Naive thymus-derived CD4-positive, alpha-beta T cell (primary cell): ENCODE measurements at regions of chr14 and their contacts with region 1.

Region 1: DNA sequence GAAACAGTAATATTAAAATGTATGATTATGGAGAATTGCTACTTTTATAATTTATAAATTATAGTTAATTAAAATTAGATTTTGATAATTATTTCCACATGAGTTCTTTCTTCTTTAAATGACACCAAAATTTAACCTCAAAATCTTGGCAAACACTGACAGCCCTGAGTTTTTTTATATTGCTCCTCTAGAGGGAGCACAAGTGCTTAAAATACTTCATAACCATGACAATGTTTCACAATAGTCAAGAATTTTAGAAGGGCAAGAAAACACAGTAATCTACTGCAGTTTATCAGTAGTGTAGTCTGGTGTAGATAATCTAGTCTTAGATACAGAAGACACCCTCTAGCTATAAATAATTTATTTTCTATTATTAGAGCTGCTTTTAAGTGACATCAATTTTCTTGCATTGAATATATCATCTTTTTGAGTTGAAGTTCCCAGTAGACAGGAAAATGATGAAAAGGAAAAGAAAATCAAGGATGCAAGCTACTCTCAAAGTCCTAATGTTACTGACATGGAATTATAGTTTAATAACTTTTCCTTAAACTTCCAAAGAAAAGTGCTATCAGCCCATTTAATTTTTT is 14.3 kb upstream of the PTGER2 start:
- DNase-seq: peak in 6 of 9 donors; percentile 28 to 68 (median 51)
- ATAC-seq: peak; percentile 84
- H3K4me3 ChIP-seq: no peak overlapping the region
- H3K4me3 Mint-ChIP-seq: peak overlapping the region in 1 of 10 donors; percentile 23
- H3K27ac ChIP-seq: no peak overlapping the region
- H3K27ac Mint-ChIP-seq: no peak overlapping the region
- H3K4me1 ChIP-seq: peaks cover 3 to 5% of the 10 kb centered on the region in 2 donors
- H3K4me1 Mint-ChIP-seq: peaks cover 8 to 63% (median 25%) of the 10 kb centered on the region in 7 donors
- H3K27me3 ChIP-seq: no peaks in the 10 kb centered on the region
- H3K27me3 Mint-ChIP-seq: peaks cover 0 to 9% (median 0%) of the 10 kb centered on the region in 5 donors

Region 2: GRCh38 chr14:51922624-51923023 is 377.2 kb before region 1 on chr14:
- CTCF ChIA-PET with region 1: no interaction called
- POLR2A ChIA-PET with region 1: no interaction called
- intact Hi-C with region 1: no loop called
- DNase-seq: no peak
- ATAC-seq: peak; percentile 29
- H3K4me3 ChIP-seq: no peak overlapping the region
- H3K4me3 Mint-ChIP-seq: peak overlapping the region in 6 of 10 donors; percentile 1 to 39 (median 36)
- H3K27ac ChIP-seq: no peak overlapping the region
- H3K27ac Mint-ChIP-seq: peak overlapping the region in 8 of 9 donors; percentile 5 to 81 (median 65)
- H3K4me1 ChIP-seq: peaks cover 5 to 17% of the 10 kb centered on the region in 2 donors
- H3K4me1 Mint-ChIP-seq: peaks cover 22 to 80% (median 71%) of the 10 kb centered on the region in 7 donors
- H3K27me3 ChIP-seq: no peaks in the 10 kb centered on the region
- H3K27me3 Mint-ChIP-seq: no peaks in the 10 kb centered on the region

Region 3: DNA sequence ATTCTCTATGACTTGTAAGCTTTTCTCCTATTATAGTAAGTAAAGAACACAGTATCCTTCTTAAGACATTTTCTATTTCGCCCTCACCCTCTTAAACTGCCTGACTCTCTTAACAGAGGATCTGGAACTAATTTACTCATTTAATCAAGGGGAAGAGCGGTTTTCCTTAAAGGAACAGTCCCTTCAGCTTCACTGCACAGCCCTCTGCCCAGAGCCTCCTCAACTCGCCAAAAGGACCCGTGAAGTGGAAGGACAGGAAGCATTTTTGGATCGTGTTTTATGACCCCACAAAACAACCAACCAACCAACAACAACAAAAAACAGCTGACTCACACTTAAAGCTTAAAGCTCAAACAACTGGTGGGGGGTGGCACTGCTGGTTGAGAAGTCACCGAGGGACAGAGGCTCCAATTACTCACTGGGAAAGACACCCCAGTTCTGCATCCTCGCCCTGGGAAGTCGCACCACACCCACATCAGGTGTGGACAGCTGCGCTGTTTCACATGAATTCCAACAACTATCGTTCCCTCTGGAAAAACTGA is 266.6 kb before region 1 on chr14:
- CTCF ChIA-PET with region 1: no interaction called
- POLR2A ChIA-PET with region 1: no interaction called
- intact Hi-C with region 1: no loop called
- DNase-seq: no peak
- ATAC-seq: no peak
- H3K4me3 ChIP-seq: no peak overlapping the region
- H3K4me3 Mint-ChIP-seq: no peak overlapping the region
- H3K27ac ChIP-seq: no peak overlapping the region
- H3K27ac Mint-ChIP-seq: no peak overlapping the region
- H3K4me1 ChIP-seq: no peaks in the 10 kb centered on the region
- H3K4me1 Mint-ChIP-seq: peaks cover 0 to 2% (median 0%) of the 10 kb centered on the region in 7 donors
- H3K27me3 ChIP-seq: no peaks in the 10 kb centered on the region
- H3K27me3 Mint-ChIP-seq: peaks cover 4 to 16% (median 15%) of the 10 kb centered on the region in 5 donors

Region 4: DNA sequence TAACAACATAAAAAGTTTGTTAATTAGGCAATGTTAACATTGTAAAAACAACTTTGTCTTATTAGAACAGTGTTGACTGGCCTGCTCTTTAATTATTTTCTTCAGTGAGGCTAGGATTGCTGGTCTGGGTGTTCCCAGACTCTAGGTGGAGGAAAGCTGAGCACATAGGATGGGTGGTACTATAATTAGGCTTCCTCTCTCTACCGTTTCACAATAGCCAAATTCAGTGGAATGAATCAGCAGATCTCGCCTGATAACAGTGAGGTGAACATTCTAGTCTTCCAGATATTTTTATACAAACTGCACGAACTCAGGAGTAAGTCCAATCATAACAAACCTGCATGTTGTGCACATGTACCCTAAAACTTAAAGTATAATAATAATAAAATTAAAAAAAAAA is 20.4 kb before region 1 on chr14:
- CTCF ChIA-PET with region 1: no interaction called
- POLR2A ChIA-PET with region 1: no interaction called
- intact Hi-C with region 1: no loop called
- DNase-seq: no peak
- ATAC-seq: no peak
- H3K4me3 ChIP-seq: no peak overlapping the region
- H3K4me3 Mint-ChIP-seq: no peak overlapping the region
- H3K27ac ChIP-seq: no peak overlapping the region
- H3K27ac Mint-ChIP-seq: no peak overlapping the region
- H3K4me1 ChIP-seq: no peaks in the 10 kb centered on the region
- H3K4me1 Mint-ChIP-seq: peaks cover 5 to 33% (median 10%) of the 10 kb centered on the region in 7 donors
- H3K27me3 ChIP-seq: no peaks in the 10 kb centered on the region
- H3K27me3 Mint-ChIP-seq: peaks cover 0 to 32% (median 0%) of the 10 kb centered on the region in 5 donors

Region 5: DNA sequence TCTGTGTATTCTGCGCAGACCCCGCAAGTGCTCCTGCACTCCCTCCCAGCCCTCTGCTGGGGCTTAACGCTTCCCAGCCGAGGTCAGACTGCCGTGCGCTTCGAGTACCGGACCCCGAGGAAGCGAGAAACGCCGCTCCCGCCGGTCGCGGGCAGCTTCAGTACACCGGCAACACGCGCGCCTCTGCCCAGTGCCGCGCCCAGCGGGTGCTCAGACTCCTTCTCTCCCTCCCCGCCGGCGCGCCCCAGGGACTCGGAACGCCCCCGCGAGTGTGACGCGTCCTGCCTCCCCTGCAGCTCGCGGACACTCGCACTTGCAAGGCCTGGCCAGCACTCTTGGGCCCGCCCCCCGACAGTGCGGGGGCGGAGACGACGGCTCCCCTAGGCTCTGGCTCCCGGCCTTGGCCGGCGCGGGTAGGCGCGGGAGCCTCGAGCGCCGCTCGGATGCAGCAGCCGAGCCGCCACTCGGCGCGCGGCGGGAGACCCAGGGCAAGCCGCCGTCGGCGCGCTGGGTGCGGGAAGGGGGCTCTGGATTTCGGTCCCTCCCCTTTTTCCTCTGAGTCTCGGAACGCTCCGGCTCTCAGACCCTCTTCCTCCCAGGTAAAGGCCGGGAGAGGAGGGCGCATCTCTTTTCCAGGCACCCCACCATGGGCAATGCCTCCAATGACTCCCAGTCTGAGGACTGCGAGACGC is 14.3 kb after region 1 on chr14 and contains the start of gene PTGER2:
- CTCF ChIA-PET with region 1: interaction called, 9 read pairs
- POLR2A ChIA-PET with region 1: no interaction called
- intact Hi-C with region 1: loop called (anchors 1 to 2 kb)
- DNase-seq: peak; percentile 12 to 91 (median 34)
- ATAC-seq: peak; percentile 79
- H3K4me3 ChIP-seq: peak within 1 kb of the TSS; percentile 80
- H3K4me3 Mint-ChIP-seq: peak within 1 kb of the TSS; percentile 88 to 100 (median 98)
- H3K27ac ChIP-seq: peak within 1 kb of the TSS; percentile 62
- H3K27ac Mint-ChIP-seq: peak within 1 kb of the TSS; percentile 51 to 98 (median 92)
- H3K4me1 ChIP-seq: peaks cover 14 to 26% of the 10 kb centered on the region in 2 donors
- H3K4me1 Mint-ChIP-seq: peaks cover 48 to 81% (median 57%) of the 10 kb centered on the region in 7 donors
- H3K27me3 ChIP-seq: no peaks in the 10 kb centered on the region
- H3K27me3 Mint-ChIP-seq: peaks cover 0 to 5% (median 0%) of the 10 kb centered on the region in 5 donors
- total RNA-seq, gene PTGER2: 1.7 to 162 (median 15.2) TPM

Region 6: GRCh38 chr14:52413729-52414408 is 114.1 kb after region 1 on chr14:
- CTCF ChIA-PET with region 1: interaction called, 3 read pairs
- POLR2A ChIA-PET with region 1: no interaction called
- intact Hi-C with region 1: loop called in 1 of 2 experiments (anchors 1 kb)
- DNase-seq: no peak
- ATAC-seq: no peak
- H3K4me3 ChIP-seq: no peak overlapping the region
- H3K4me3 Mint-ChIP-seq: peak overlapping the region in 2 of 10 donors; percentile 13 to 74
- H3K27ac ChIP-seq: no peak overlapping the region
- H3K27ac Mint-ChIP-seq: peak overlapping the region in 2 of 9 donors; percentile 29 to 90
- H3K4me1 ChIP-seq: no peaks in the 10 kb centered on the region
- H3K4me1 Mint-ChIP-seq: peaks cover 0 to 65% (median 6%) of the 10 kb centered on the region in 7 donors
- H3K27me3 ChIP-seq: no peaks in the 10 kb centered on the region
- H3K27me3 Mint-ChIP-seq: no peaks in the 10 kb centered on the region

Region 7: GRCh38 chr14:52527049-52527448 is 227.3 kb after region 1 on chr14:
- CTCF ChIA-PET with region 1: no interaction called
- POLR2A ChIA-PET with region 1: no interaction called
- intact Hi-C with region 1: loop called in 1 of 2 experiments (anchors 5 kb)
- DNase-seq: no peak
- ATAC-seq: no peak
- H3K4me3 ChIP-seq: no peak overlapping the region
- H3K4me3 Mint-ChIP-seq: no peak overlapping the region
- H3K27ac ChIP-seq: no peak overlapping the region
- H3K27ac Mint-ChIP-seq: no peak overlapping the region
- H3K4me1 ChIP-seq: no peaks in the 10 kb centered on the region
- H3K4me1 Mint-ChIP-seq: peaks cover 0 to 2% (median 0%) of the 10 kb centered on the region in 7 donors
- H3K27me3 ChIP-seq: no peaks in the 10 kb centered on the region
- H3K27me3 Mint-ChIP-seq: no peaks in the 10 kb centered on the region

Region 8: GRCh38 chr14:52663850-52664249 is 364.1 kb after region 1 on chr14:
- CTCF ChIA-PET with region 1: interaction called, 3 read pairs
- POLR2A ChIA-PET with region 1: no interaction called
- intact Hi-C with region 1: loop called in 1 of 2 experiments (anchors 5 kb)
- DNase-seq: no peak
- ATAC-seq: no peak
- H3K4me3 ChIP-seq: no peak overlapping the region
- H3K4me3 Mint-ChIP-seq: no peak overlapping the region
- H3K27ac ChIP-seq: no peak overlapping the region
- H3K27ac Mint-ChIP-seq: no peak overlapping the region
- H3K4me1 ChIP-seq: no peaks in the 10 kb centered on the region
- H3K4me1 Mint-ChIP-seq: peaks cover 0 to 10% (median 0%) of the 10 kb centered on the region in 7 donors
- H3K27me3 ChIP-seq: no peaks in the 10 kb centered on the region
- H3K27me3 Mint-ChIP-seq: no peaks in the 10 kb centered on the region

Region 9: DNA sequence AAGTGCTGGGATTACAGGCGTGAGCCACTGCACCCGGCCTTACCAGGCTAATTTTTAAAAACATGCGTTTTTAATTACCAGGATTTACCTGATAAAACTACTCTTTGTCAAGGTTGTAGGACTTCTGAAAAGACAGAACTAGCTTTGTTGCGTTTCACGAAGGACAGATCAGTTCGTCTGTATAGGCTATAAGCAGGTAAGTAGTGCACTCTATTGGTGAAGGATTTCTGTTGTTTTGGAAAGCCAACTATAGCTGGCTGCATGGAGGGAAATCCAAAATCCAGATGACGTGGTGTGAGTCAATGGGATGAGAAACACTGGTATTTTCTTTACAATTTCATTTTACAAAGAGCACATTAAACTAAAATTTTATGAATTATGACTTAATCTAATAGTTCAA is 477.0 kb after region 1 on chr14:
- CTCF ChIA-PET with region 1: no interaction called
- POLR2A ChIA-PET with region 1: no interaction called
- intact Hi-C with region 1: loop called in 1 of 2 experiments (anchors 1 kb)
- DNase-seq: peak in 3 of 9 donors; percentile 35 to 39 (median 36)
- ATAC-seq: no peak
- H3K4me3 ChIP-seq: no peak overlapping the region
- H3K4me3 Mint-ChIP-seq: no peak overlapping the region
- H3K27ac ChIP-seq: no peak overlapping the region
- H3K27ac Mint-ChIP-seq: peak overlapping the region in 4 of 9 donors; percentile 13 to 59 (median 30)
- H3K4me1 ChIP-seq: no peaks in the 10 kb centered on the region
- H3K4me1 Mint-ChIP-seq: peaks cover 0 to 11% (median 0%) of the 10 kb centered on the region in 7 donors
- H3K27me3 ChIP-seq: no peaks in the 10 kb centered on the region
- H3K27me3 Mint-ChIP-seq: no peaks in the 10 kb centered on the region

Region 10: DNA sequence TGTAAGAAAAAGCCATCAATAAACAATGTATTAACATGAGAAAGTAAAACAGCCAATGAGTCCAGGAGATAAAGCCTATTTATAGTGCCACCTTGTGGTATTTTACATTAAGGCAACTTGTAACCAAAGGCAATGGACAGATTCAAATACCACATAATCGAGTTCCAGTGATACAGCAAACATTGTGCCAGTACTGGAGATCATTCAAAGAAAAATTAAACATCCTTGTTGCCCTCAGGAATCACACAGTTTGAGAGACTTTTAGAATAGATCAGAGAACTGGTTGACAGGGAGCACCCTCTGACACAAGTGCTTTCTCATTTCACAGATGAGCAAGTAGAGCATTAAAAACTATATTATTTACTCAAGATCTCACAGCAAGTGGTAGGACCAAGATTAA is 755.2 kb after region 1 on chr14:
- CTCF ChIA-PET with region 1: no interaction called
- POLR2A ChIA-PET with region 1: no interaction called
- intact Hi-C with region 1: loop called in 1 of 2 experiments (anchors 1 kb)
- DNase-seq: peak in 7 of 9 donors; percentile 8 to 47 (median 30)
- ATAC-seq: peak; percentile 76
- H3K4me3 ChIP-seq: no peak overlapping the region
- H3K4me3 Mint-ChIP-seq: no peak overlapping the region
- H3K27ac ChIP-seq: no peak overlapping the region
- H3K27ac Mint-ChIP-seq: peak overlapping the region in 3 of 9 donors; percentile 11 to 40 (median 19)
- H3K4me1 ChIP-seq: no peaks in the 10 kb centered on the region
- H3K4me1 Mint-ChIP-seq: peaks cover 0 to 11% (median 4%) of the 10 kb centered on the region in 7 donors
- H3K27me3 ChIP-seq: no peaks in the 10 kb centered on the region
- H3K27me3 Mint-ChIP-seq: no peaks in the 10 kb centered on the region

Region 11: GRCh38 chr14:54175298-54175942 is 1875.6 kb after region 1 on chr14:
- CTCF ChIA-PET with region 1: no interaction called
- POLR2A ChIA-PET with region 1: no interaction called
- intact Hi-C with region 1: no loop called
- DNase-seq: peak in 6 of 9 donors; percentile 6 to 34 (median 17)
- ATAC-seq: peak; percentile 45
- H3K4me3 ChIP-seq: no peak overlapping the region
- H3K4me3 Mint-ChIP-seq: no peak overlapping the region
- H3K27ac ChIP-seq: no peak overlapping the region
- H3K27ac Mint-ChIP-seq: no peak overlapping the region
- H3K4me1 ChIP-seq: no peaks in the 10 kb centered on the region
- H3K4me1 Mint-ChIP-seq: no peaks in the 10 kb centered on the region
- H3K27me3 ChIP-seq: no peaks in the 10 kb centered on the region
- H3K27me3 Mint-ChIP-seq: peaks cover 29 to 69% (median 60%) of the 10 kb centered on the region in 5 donors